ENCODE measurements at regions of chr1 and their contacts with region 1.

Region 1: DNA sequence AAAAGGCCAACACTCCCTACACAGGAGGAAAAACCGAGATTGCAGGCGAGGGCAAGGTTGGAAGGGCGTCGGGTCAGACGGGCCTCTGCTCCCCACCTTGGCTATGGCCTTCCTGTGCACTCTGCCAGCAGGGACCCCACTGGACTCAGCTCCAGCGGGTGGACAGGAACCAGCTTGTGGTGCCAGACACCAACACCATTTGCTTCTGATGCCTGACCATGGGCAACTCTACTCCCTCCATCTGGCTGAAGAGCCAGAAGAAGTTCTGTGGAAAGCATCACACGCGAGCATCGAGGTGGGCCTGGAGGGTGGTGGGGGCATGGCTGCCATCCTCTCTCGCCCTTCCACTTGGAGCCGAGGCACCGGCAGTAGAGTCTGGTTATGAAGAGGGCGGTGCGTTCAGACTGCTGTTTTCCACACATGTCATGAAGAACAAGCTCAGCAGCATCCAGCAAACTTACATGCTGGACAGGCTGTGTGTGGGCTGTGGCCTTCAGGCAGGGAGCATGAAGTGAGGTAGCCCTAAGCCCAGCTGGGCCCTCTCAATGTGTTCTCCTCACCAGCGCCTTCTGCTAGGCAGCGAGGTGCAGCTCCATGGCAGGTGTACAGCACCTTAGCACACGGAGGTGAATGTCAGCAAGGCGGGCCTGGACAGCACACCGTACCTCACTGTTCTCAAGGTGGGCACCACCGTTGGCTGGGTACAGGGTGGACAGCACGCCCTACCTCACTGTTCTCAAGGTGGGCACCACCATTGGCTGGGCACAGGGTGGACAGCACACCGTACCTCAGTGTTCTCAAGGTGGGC is 15.6 kb upstream of the ZNF669 start:
- DNase-seq: peak; percentile 45
- ATAC-seq: peak; percentile 10

Region 2: GRCh38 chr1:246724016-246724730 is 395.6 kb before region 1 on chr1 and contains the start of gene SCCPDH:
- intact Hi-C with region 1: no loop called
- DNase-seq: peak; percentile 86
- ATAC-seq: peak; percentile 95
- total RNA-seq, gene SCCPDH: 31.2 TPM

Region 3: GRCh38 chr1:247043406-247043805 is 76.4 kb before region 1 on chr1:
- intact Hi-C with region 1: no loop called
- DNase-seq: no peak
- ATAC-seq: no peak

Region 4: DNA sequence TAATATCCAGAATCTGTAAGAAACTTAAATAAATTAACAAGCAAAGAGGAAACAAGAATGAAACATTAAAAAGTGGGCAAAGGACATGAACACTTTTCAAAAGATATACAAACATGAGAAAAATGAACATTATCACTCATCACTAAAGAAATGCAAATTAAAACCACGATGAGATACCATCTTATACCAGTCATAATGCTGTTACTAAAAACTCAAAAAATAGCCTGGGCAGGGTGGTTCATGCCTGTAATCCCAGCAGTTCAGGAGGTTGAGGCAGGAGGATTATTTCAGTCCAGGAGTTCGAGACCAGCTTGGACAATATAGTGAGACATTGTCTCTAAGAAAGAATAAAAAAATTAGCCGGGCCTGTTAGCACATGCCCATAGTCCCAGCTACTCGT is 45.9 kb after region 1 on chr1:
- intact Hi-C with region 1: loop called (anchors 5 kb)
- DNase-seq: no peak
- ATAC-seq: no peak

Measured in Right ventricle myocardium inferior (tissue), 1 donor.